ENCODE measurements at regions of chr17 and their contacts with region 1.

Region 1: GRCh38 chr17:75749545-75750389 is 15.2 kb downstream of the GALK1 start:
- DNase-seq: peak; percentile 43
- ATAC-seq: peak; percentile 86
- H3K4me3 ChIP-seq: no peak overlapping the region
- H3K27ac ChIP-seq: no peak overlapping the region
- H3K4me1 ChIP-seq: peaks cover 1% of the 10 kb centered on the region; the same call in 1 of the 2 replicates
- H3K27me3 ChIP-seq: no peaks in the 10 kb centered on the region
- CTCF ChIP-seq: peak; percentile 98

Region 2: DNA sequence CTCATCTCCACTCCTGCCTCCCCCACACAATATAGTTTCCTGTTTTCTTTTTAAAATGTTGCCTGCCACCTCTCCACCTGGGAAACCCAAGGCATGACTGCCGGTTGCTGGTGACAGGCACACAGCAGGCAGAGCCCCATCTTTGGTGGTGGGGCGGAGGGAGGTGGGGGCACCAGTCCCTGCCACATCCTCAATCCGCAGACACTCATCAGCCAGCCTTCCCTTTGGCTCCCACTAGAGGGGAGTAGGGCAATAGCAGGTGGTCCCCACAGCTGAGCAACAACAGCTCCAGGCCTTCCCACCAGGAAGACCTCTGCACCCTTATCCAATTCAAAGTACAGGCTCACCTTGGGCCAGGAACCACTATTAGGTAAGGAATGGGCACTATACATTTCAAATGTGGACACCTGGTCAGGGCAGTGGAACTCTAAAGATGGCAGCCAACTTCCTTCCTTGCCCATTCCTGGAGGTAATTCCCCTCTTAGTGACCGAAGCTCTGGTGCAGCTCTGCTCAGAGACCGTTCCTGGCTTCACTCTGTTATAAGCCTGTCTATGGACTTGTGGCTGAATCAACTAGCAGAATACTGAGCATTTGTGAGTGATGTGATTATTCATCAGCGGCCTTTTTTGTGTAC is 96.7 kb before region 1 on chr17:
- CTCF ChIA-PET with region 1: interaction called, 17 read pairs
- POLR2A ChIA-PET with region 1: no interaction called
- in situ Hi-C with region 1: no loop called
- intact Hi-C with region 1: no loop called
- DNase-seq: no peak
- ATAC-seq: peak; percentile 84
- H3K4me3 ChIP-seq: no peak overlapping the region
- H3K27ac ChIP-seq: no peak overlapping the region
- H3K4me1 ChIP-seq: no peaks in the 10 kb centered on the region
- H3K27me3 ChIP-seq: no peaks in the 10 kb centered on the region
- CTCF ChIP-seq: peak; percentile 89

Region 3: DNA sequence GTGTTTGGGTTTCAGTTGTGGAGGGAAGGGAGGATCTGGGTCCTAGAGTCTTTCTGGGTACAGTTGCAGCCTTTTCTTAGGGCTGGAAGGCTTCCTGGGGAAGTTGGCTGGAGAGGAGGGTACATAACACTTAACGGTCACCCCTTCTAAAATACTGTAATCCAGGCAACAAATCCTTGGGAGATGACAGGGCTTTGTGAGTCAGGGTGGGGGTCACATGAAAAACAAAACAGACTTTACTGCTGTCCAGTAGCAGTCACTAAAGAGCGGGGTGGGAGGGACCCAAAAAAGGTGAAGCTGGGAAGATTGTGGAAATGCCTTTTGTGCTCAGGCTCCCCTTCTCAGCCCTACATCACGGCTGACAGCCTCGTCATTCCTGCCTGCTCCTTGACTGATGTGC is 76.3 kb before region 1 on chr17:
- CTCF ChIA-PET with region 1: interaction called, 15 read pairs
- POLR2A ChIA-PET with region 1: no interaction called
- in situ Hi-C with region 1: no loop called
- intact Hi-C with region 1: loop called (anchors 1 kb)
- DNase-seq: no peak
- ATAC-seq: peak; percentile 30; the same call in 1 of the 2 replicates
- H3K4me3 ChIP-seq: no peak overlapping the region
- H3K27ac ChIP-seq: no peak overlapping the region
- H3K4me1 ChIP-seq: peaks cover 3% of the 10 kb centered on the region
- H3K27me3 ChIP-seq: no peaks in the 10 kb centered on the region
- CTCF ChIP-seq: no peak

Region 4: DNA sequence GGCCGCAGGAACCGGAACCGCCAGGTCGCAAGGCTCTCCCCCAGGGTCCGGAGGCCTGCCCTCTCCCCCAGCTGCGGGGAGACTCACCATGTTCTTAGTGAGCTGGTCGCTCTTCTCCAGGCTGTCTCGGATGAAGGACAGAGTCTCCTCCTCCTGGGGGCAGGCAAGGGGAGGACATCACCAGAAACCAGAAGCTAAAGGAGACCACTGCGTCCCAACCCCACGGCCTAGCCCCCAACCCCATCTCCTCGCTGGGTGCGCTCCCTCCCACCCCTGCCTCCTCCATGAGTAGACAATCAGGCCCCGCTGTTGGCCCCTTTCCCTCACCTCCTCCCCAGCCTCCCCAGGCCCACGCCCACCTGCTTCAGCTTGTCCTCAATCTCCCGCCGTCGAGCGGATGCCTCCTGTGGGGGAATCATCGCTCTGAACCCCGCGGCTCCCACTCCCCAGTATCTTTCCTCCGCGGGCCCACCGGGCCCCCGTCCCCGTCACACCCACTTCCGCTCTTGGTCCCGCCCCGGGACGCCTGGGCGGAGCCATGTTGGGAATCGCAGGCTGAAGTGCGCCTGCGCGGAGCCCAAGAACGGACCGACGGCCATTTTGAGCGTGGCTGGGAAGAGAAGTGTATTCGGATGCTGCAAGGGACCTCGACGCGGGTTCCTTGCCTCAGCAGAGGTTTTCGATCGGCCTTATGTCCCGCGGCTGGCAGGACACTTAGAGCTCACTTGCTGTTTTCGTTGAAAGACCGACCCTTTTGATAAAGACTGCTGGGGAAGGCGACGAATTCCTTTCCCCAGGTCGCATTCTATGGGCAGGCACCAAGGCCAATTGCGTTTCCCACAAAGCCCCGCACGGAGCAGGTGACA is 353.7 kb after region 1 on chr17 and contains the start of gene EXOC7:
- CTCF ChIA-PET with region 1: no interaction called
- POLR2A ChIA-PET with region 1: no interaction called
- in situ Hi-C with region 1: no loop called
- intact Hi-C with region 1: no loop called
- DNase-seq: peak; percentile 58
- ATAC-seq: peak; percentile 95
- H3K4me3 ChIP-seq: peak within 1 kb of the TSS; percentile 79 to 87
- H3K27ac ChIP-seq: peak within 1 kb of the TSS; percentile 95
- H3K4me1 ChIP-seq: peaks cover 14% of the 10 kb centered on the region
- H3K27me3 ChIP-seq: no peaks in the 10 kb centered on the region
- CTCF ChIP-seq: no peak
- total RNA-seq, gene EXOC7: 190 TPM

Measured in Panc1 (cell line).